H1 (cell line): ENCODE measurements at regions of chr19 and their contacts with region 1.

Region 1: GRCh38 chr19:39915101-39915847 is 19.2 kb downstream of the FCGBP start:
- DNase-seq: no peak
- H3K4me3 ChIP-seq: no peak overlapping the region
- H3K27ac ChIP-seq: no peak overlapping the region
- H3K4me1 ChIP-seq: no peaks in the 10 kb centered on the region
- H3K27me3 ChIP-seq: no peaks in the 10 kb centered on the region
- CTCF ChIP-seq: no peak
- EP300 ChIP-seq: no peak
- POLR2A ChIP-seq: no peak
- RAD21 ChIP-seq: no peak

Region 2: GRCh38 chr19:39818626-39819097 is 96.6 kb before region 1 on chr19:
- CTCF ChIA-PET with region 1: no interaction called
- POLR2A ChIA-PET with region 1: no interaction called
- DNase-seq: no peak
- H3K4me3 ChIP-seq: no peak overlapping the region
- H3K27ac ChIP-seq: no peak overlapping the region
- H3K4me1 ChIP-seq: peaks cover 0 to 3% (median under 1%) of the 10 kb centered on the region in 4 experiments; a peak in 2 of 7 replicates
- H3K27me3 ChIP-seq: no peaks in the 10 kb centered on the region
- CTCF ChIP-seq: no peak
- EP300 ChIP-seq: no peak
- POLR2A ChIP-seq: no peak
- RAD21 ChIP-seq: no peak

Region 3: DNA sequence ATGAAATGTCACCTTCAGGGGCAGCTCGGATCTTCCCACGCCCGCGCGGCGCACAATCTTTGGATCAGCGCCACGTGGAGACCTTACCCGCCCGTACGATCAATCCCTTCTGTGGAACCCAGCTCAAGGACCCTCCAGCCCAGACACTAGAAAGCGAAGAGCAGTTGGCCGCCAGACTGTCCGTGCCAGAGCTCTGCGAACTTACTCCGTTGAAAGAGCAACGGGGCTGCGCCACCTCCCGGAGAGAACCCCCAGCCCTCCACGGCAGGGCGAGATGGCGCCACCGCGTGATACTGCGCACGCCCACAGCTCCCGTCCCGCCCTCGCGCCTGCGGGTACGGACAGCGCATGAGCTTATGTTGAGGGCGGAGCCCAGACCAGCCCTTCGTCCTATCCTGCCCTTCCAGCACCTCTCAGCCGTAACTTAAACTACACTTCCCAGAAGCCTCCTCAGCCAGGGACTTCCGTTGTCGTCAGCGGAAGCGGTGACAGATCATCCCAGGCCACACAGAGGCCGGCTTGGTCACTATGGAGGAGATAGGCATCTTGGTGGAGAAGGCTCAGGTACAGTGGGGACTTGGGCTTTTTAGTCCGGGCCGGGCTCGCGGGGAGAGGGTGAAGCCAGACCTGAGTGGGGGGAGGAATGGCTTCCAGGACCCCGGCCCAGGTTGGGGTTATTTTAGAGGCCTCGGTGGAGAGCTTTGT is 55.6 kb after region 1 on chr19 and contains the start of gene PSMC4:
- CTCF ChIA-PET with region 1: interaction called, 10 read pairs
- POLR2A ChIA-PET with region 1: interaction called, 6 read pairs
- DNase-seq: peak; percentile 91 to 97
- H3K4me3 ChIP-seq: peak within 1 kb of the TSS; percentile 66 to 98 (median 86)
- H3K27ac ChIP-seq: peak within 1 kb of the TSS; percentile 38; the same call in 1 of the 2 replicates
- H3K4me1 ChIP-seq: peaks cover 0 to 2% (median 0%) of the 10 kb centered on the region in 4 experiments; a peak in 1 of 7 replicates
- H3K27me3 ChIP-seq: no peaks in the 10 kb centered on the region
- CTCF ChIP-seq: peak; percentile 62 to 79 (median 77)
- EP300 ChIP-seq: peak in 1 of 2 experiments; percentile 60; a peak in 1 of 3 replicates
- POLR2A ChIP-seq: peak; percentile 80 to 82
- RAD21 ChIP-seq: peak; percentile 57 to 63
- total RNA-seq, gene PSMC4: 126 and 127 TPM in 2 replicates